Activated CD4-positive, alpha-beta memory T cell treated with anti-CD3 and anti-CD28 coated beads, Interleukin-2, amount 10 ng/mL, durations not matched to agents 7 days and 5 days (primary cell): ENCODE measurements at regions of chr3 and their contacts with region 1.

Region 1: DNA sequence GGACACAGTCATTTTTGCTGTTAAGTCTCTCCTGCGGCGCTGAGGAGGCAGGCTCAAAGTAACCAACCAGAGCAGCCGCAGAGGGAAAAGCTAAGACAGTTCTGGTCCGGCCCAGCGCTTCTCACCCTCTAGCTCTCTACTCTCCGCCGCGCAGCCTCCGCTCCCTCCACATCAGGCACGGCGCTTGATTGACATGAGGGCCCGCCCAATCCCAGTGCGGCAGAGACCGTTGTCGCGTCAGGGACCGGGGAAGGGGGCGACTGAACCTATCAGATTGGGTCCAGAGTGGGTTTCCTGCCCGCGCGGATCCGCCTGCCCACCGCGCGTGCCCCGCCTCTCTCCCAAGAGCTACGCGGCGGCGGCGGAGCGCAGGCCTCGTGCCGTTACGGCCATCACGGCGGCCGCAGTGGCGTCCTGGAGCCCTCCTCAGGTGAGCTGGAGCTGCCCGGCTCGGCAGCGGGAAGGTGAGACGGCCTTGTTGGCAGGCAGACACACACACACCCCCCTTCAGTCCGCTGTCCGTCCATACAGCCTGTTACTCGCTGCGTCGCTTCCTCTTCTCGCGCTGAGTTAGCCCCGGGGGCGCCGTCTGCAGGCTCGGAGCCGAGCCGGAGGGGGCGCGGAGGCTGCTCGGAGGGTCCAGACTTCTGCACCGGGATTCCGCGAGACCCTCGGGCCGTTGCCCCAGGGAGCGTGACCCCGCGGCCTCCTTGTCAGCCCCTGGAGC is at the start of gene NCK1:
- DNase-seq: peak; percentile 99
- H3K4me3 Mint-ChIP-seq: peak within 1 kb of the TSS; percentile 97
- H3K27ac Mint-ChIP-seq: peak within 1 kb of the TSS; percentile 98
- H3K4me1 Mint-ChIP-seq: peaks cover 55% of the 10 kb centered on the region
- H3K27me3 Mint-ChIP-seq: no peaks in the 10 kb centered on the region
- total RNA-seq, gene NCK1: 50.8 to 51.3 TPM

Region 2: DNA sequence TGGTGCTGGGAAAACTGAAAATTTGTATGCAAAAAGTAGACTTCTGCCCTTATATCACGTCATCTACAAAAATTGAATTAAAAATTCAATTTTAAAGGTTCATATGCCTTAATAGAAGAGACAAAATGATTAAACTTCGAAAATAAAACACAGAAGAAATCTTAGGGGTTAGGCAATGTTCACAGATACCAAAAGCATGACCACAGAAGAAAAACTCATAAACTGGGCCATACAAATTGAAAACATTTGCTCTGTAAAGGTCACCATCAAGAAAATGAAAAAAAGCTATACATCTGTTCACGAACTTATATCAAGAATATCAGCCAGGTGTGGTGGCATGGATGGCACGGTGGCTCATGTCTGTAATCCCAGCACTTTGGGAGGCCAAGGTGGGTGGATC is 366.8 kb before region 1 on chr3:
- CTCF ChIA-PET with region 1: no interaction called
- POLR2A ChIA-PET with region 1: no interaction called
- DNase-seq: no peak
- H3K4me3 Mint-ChIP-seq: no peak overlapping the region
- H3K27ac Mint-ChIP-seq: no peak overlapping the region
- H3K4me1 Mint-ChIP-seq: no peaks in the 10 kb centered on the region
- H3K27me3 Mint-ChIP-seq: no peaks in the 10 kb centered on the region

Region 3: GRCh38 chr3:136778865-136779264 is 83.2 kb before region 1 on chr3:
- CTCF ChIA-PET with region 1: no interaction called
- POLR2A ChIA-PET with region 1: no interaction called
- DNase-seq: no peak
- H3K4me3 Mint-ChIP-seq: no peak overlapping the region
- H3K27ac Mint-ChIP-seq: no peak overlapping the region
- H3K4me1 Mint-ChIP-seq: no peaks in the 10 kb centered on the region
- H3K27me3 Mint-ChIP-seq: no peaks in the 10 kb centered on the region

Region 4: GRCh38 chr3:136838641-136839555 is 23.2 kb before region 1 on chr3:
- CTCF ChIA-PET with region 1: interaction called, 7 read pairs
- POLR2A ChIA-PET with region 1: interaction called, 56 read pairs
- DNase-seq: no peak
- H3K4me3 Mint-ChIP-seq: no peak overlapping the region
- H3K27ac Mint-ChIP-seq: peak overlapping the region; percentile 67
- H3K4me1 Mint-ChIP-seq: peaks cover 34% of the 10 kb centered on the region
- H3K27me3 Mint-ChIP-seq: no peaks in the 10 kb centered on the region

Region 5: DNA sequence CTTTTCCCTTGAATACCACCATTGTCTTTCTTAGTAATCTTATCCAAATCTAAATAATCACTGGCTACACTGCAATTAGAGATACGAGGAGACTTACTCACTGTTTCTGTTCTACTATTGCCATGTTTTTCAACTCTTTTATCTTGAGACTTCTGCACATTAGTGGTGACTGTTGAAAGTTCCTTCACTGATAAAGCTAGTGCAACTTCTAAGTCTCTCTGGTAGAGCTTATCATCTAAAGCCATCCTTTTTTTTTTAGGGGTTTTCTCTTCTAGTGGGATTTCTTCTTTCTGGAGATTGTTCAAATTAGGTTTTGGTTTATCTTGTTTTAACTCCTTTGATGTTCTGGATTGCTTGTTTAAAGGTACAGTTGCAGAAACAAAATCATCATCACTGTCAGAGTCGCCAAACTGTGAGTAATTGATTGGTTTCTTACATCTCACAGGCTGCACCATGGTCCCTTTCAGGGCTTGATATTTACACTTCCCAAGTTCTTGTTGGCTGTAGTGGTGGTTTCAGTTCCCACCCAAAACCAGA is 37.6 kb after region 1 on chr3:
- CTCF ChIA-PET with region 1: interaction called, 4 read pairs
- POLR2A ChIA-PET with region 1: interaction called, 12 read pairs
- DNase-seq: no peak
- H3K4me3 Mint-ChIP-seq: no peak overlapping the region
- H3K27ac Mint-ChIP-seq: peak overlapping the region; percentile 1
- H3K4me1 Mint-ChIP-seq: peaks cover 47% of the 10 kb centered on the region
- H3K27me3 Mint-ChIP-seq: no peaks in the 10 kb centered on the region

Region 6: DNA sequence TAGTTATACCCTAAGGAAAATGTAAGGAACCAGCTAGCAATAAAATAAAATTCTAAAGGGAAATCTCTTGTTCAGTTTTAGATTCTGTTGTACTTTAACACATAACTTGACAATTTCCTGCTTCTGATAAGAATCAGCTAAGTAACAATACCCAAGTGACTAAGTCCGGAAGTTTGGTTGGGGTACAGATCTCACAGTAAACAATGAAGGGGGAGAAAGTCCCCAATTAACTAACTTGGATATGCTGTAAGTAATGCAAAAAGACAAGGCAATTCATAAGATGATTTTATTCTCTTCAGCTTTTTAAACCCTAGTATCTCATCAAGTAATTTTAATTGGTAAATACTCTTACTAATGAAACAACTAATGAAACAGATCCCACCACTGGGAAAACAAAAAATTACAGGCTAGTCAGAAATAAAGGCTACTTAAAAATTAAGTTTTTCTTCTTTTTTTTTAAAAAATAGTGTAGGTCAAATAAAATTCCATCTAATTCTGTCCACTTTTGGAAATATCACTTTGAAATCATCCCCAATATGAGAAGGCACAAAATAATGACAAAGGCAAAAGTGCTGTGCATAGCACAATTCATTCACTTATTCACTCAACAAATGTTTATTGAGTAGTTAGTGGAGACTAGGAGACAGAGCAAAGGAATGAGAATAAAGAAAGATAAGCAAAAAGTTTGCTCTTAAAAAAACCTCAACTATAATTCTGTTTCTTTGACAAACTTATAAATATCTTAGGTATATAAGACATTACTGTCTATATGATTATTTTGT is 57.9 kb after region 1 on chr3:
- CTCF ChIA-PET with region 1: interaction called, 8 read pairs
- POLR2A ChIA-PET with region 1: interaction called, 49 read pairs
- DNase-seq: no peak
- H3K4me3 Mint-ChIP-seq: peak overlapping the region; percentile 56
- H3K27ac Mint-ChIP-seq: peak overlapping the region; percentile 85
- H3K4me1 Mint-ChIP-seq: peaks cover 67% of the 10 kb centered on the region
- H3K27me3 Mint-ChIP-seq: no peaks in the 10 kb centered on the region